MCF 10A (cell line): ENCODE measurements at regions of chr10 and their contacts with region 1.

Region 1: GRCh38 chr10:27446091-27446918 is 57.8 kb upstream of the RAB18 start:
- DNase-seq: peak; percentile 45
- H3K4me3 Mint-ChIP-seq: no peak overlapping the region
- H3K27ac Mint-ChIP-seq: peak overlapping the region; percentile 73
- H3K4me1 Mint-ChIP-seq: peaks cover 16% of the 10 kb centered on the region
- H3K27me3 Mint-ChIP-seq: no peaks in the 10 kb centered on the region
- CTCF ChIP-seq: peak; percentile 38

Region 2: DNA sequence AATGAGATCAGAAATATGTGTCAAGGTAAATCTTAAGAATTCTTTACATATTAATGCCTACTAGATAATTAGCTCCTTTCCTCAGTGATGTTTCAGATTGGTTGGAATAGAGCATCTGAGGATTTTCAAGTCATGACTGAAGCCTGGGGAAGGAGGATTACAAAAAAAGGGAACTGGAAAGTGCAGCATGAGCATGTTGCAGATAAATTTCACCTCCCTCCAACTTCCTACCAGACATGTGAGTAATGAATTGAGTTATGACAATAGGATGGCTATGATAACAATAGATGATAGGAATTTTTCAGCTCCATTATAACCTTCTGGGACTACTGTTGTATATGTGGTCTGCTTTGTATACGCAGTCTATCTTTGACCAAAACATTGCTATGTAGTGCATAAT is 46.4 kb before region 1 on chr10:
- CTCF ChIA-PET with region 1: no interaction called
- POLR2A ChIA-PET with region 1: no interaction called
- intact Hi-C with region 1: no loop called
- DNase-seq: no peak
- H3K4me3 Mint-ChIP-seq: no peak overlapping the region
- H3K27ac Mint-ChIP-seq: no peak overlapping the region
- H3K4me1 Mint-ChIP-seq: peaks cover 4% of the 10 kb centered on the region
- H3K27me3 Mint-ChIP-seq: no peaks in the 10 kb centered on the region
- CTCF ChIP-seq: no peak

Region 3: GRCh38 chr10:27482984-27483956 is 37.0 kb after region 1 on chr10:
- CTCF ChIA-PET with region 1: interaction called, 6 read pairs
- POLR2A ChIA-PET with region 1: interaction called, 5 read pairs
- intact Hi-C with region 1: loop called (anchors 5 kb)
- DNase-seq: peak; percentile 57
- H3K4me3 Mint-ChIP-seq: peak overlapping the region; percentile 59
- H3K27ac Mint-ChIP-seq: peak overlapping the region; percentile 87
- H3K4me1 Mint-ChIP-seq: peaks cover 30% of the 10 kb centered on the region
- H3K27me3 Mint-ChIP-seq: no peaks in the 10 kb centered on the region
- CTCF ChIP-seq: no peak

Region 4: GRCh38 chr10:27542812-27543211 is 96.5 kb after region 1 on chr10:
- CTCF ChIA-PET with region 1: interaction called, 9 read pairs
- POLR2A ChIA-PET with region 1: interaction called, 3 read pairs
- intact Hi-C with region 1: loop called (anchors 5 kb)
- DNase-seq: peak; percentile 47
- H3K4me3 Mint-ChIP-seq: no peak overlapping the region
- H3K27ac Mint-ChIP-seq: no peak overlapping the region
- H3K4me1 Mint-ChIP-seq: peaks cover 7% of the 10 kb centered on the region
- H3K27me3 Mint-ChIP-seq: no peaks in the 10 kb centered on the region
- CTCF ChIP-seq: no peak

Region 5: GRCh38 chr10:27661514-27662286 is 215.4 kb after region 1 on chr10:
- CTCF ChIA-PET with region 1: interaction called, 3 read pairs
- POLR2A ChIA-PET with region 1: no interaction called
- intact Hi-C with region 1: loop called (anchors 1 kb)
- DNase-seq: peak; percentile 16
- H3K4me3 Mint-ChIP-seq: no peak overlapping the region
- H3K27ac Mint-ChIP-seq: no peak overlapping the region
- H3K4me1 Mint-ChIP-seq: peaks cover 14% of the 10 kb centered on the region
- H3K27me3 Mint-ChIP-seq: no peaks in the 10 kb centered on the region
- CTCF ChIP-seq: no peak